ENCODE measurements at regions of chr4 and their contacts with region 1.

Region 1: DNA sequence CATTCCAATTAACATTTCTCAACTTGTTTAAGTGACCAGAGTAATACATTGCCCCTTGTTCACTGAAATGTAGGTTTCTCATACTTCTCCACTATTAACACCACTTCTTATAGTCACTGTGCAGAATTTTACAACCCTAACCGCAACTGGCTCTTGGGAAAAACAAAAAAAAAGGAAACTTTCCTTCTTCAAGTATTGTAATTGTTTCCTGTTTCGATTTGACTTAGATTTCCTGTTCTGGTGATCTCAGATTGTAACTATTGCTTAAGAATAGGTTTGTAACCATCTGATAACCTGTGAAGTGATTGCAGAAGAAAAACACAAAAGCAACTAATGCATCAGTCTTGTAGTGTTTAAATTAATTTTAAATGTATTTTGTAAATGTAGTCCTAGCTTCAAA is 594.7 kb upstream of the GALNT7 start:
- DNase-seq: peak; percentile 95
- H3K4me3 ChIP-seq: no peak overlapping the region
- H3K27ac ChIP-seq: peak overlapping the region; percentile 31
- H3K4me1 ChIP-seq: peaks cover 53% of the 10 kb centered on the region
- H3K27me3 ChIP-seq: no peaks in the 10 kb centered on the region
- CTCF ChIP-seq: no peak

Region 2: GRCh38 chr4:172356016-172356415 is 217.9 kb before region 1 on chr4:
- CTCF ChIA-PET with region 1: no interaction called
- POLR2A ChIA-PET with region 1: no interaction called
- intact Hi-C with region 1: loop called (anchors 10 kb)
- DNase-seq: peak; percentile 92
- H3K4me3 ChIP-seq: no peak overlapping the region
- H3K27ac ChIP-seq: no peak overlapping the region
- H3K4me1 ChIP-seq: peaks cover 22% of the 10 kb centered on the region
- H3K27me3 ChIP-seq: no peaks in the 10 kb centered on the region
- CTCF ChIP-seq: no peak

Region 3: DNA sequence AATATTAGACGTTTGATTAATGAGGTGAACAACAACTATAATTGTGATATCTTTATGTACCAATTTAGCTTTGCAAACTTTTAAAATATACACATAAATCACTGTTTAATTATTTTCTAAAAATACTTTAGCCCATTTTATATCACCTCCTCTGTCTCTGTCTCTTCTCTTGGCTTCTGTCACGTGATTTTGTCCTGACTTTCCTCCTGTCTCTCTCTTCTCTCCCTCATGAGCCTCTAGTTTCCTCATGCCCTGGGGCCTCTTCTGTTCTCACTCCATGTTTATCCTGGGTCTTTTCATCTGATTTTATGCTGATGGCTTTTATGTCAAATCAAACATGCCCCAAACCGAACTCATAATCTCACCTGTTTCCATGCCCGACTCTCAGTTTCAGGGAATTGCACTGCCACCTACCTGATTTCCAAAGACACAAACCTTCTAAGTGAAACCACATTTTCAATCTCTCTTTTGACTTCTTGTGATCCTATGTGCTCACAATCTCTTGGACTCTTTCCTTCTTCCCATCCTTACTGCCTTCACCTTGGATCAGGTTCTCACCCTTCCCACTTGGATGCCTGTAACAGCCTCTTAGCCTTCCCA is 291.7 kb after region 1 on chr4:
- CTCF ChIA-PET with region 1: no interaction called
- POLR2A ChIA-PET with region 1: no interaction called
- intact Hi-C with region 1: no loop called
- DNase-seq: no peak
- H3K4me3 ChIP-seq: no peak overlapping the region
- H3K27ac ChIP-seq: no peak overlapping the region
- H3K4me1 ChIP-seq: no peaks in the 10 kb centered on the region
- H3K27me3 ChIP-seq: no peaks in the 10 kb centered on the region
- CTCF ChIP-seq: no peak

Measured in A673 (cell line).